ENCODE measurements at regions of chr1 and their contacts with region 1.

Region 1: DNA sequence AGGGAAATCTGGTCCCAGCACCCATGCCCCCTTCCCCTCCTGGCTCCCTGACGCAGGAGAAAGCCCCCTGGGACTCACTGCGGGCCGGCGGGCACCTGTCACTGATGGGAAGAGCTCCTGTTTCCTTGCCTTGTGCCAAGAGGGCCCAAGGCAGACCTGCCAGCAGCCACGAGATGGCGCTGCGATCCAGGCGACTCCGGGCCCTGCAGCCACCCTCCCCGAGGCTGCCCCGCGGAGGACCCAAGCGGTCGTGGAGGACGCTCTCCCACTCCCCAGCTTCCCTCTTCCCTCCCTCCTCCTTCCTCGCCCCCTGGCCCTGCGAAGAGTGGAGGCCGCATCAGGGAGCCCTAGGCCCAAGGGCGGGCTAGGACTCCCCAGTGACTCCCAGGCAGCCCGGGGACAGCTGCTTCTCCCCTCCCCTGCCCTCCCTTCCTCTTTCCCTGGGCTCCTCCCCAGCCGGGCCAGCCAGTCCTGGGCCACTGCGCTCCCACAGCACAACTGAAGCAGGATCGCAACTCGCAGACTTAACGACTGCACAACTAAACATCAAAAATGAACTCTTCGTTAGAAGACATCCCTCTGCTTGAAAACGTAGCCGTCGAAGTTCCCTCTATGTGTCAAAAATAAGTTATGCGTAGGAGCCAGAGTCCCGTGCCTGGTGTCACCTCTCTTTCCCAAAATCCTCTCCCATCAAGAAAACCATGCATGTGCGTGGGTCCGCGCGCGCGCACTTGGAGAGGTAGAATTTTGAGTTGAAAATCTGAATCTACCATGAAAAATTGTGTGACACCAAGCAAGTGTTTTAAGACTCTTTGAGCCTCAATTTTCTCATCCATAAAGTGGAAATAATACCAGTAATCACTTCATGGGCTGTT is 34.2 kb downstream of the BATF3 start:
- DNase-seq: peak; percentile 81
- H3K4me3 ChIP-seq: peak overlapping the region in 2 of 3 experiments; percentile 39 to 40
- H3K27ac ChIP-seq: peak overlapping the region; percentile 41
- H3K4me1 ChIP-seq: peaks cover 27% of the 10 kb centered on the region
- H3K27me3 ChIP-seq: peaks cover 3 to 4% of the 10 kb centered on the region in 2 experiments
- CTCF ChIP-seq: peak; percentile 90 to 98
- POLR2A ChIP-seq: no peak

Region 2: GRCh38 chr1:212520746-212521145 is 144.7 kb before region 1 on chr1:
- CTCF ChIA-PET with region 1: no interaction called
- POLR2A ChIA-PET with region 1: no interaction called
- dilution Hi-C with region 1: no loop called
- intact Hi-C with region 1: no loop called
- DNase-seq: no peak
- H3K4me3 ChIP-seq: no peak overlapping the region
- H3K27ac ChIP-seq: no peak overlapping the region
- H3K4me1 ChIP-seq: no peaks in the 10 kb centered on the region
- H3K27me3 ChIP-seq: peaks cover 22 to 27% of the 10 kb centered on the region in 2 experiments
- CTCF ChIP-seq: no peak
- POLR2A ChIP-seq: no peak

Region 3: DNA sequence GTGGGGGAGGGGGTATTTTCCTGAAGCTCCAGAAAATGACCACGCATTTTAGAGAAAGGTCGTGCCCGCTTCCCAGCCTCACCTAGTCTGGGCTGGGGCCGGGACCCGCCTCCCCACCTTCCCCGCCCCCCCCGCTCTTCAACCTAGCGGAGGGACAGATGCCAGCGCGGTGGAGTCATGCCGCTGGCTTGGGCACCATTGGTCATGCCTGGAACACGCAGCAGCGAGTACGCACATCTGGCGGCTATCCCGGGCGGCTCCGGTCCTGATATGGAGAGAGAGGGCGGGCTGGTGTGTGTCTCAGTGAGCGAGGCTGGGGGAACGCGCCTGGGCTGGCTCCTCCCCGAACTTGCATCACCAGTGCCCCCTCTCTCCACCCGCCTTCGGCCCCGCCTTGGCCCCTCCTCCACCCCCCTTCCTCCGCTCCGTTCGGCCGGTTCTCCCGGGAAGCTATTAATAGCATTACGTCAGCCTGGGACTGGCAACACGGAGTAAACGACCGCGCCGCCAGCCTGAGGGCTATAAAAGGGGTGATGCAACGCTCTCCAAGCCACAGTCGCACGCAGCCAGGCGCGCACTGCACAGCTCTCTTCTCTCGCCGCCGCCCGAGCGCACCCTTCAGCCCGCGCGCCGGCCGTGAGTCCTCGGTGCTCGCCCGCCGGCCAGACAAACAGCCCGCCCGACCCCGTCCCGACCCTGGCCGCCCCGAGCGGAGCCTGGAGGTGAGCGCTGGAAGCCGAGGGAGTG is 57.1 kb before region 1 on chr1 and contains the start of gene ATF3:
- CTCF ChIA-PET with region 1: interaction called, 71 read pairs
- POLR2A ChIA-PET with region 1: interaction called, 13 read pairs
- dilution Hi-C with region 1: no loop called
- intact Hi-C with region 1: loop called (anchors 1 kb)
- DNase-seq: peak; percentile 98
- H3K4me3 ChIP-seq: peak within 1 kb of the TSS; percentile 51 to 77 (median 52)
- H3K27ac ChIP-seq: peak within 1 kb of the TSS; percentile 76
- H3K4me1 ChIP-seq: peaks cover 27% of the 10 kb centered on the region
- H3K27me3 ChIP-seq: peaks cover 38 to 44% of the 10 kb centered on the region in 2 experiments
- CTCF ChIP-seq: no peak
- POLR2A ChIP-seq: peak; percentile 98
- total RNA-seq, gene ATF3: 6.1 and 10.7 TPM in 2 replicates

Region 4: DNA sequence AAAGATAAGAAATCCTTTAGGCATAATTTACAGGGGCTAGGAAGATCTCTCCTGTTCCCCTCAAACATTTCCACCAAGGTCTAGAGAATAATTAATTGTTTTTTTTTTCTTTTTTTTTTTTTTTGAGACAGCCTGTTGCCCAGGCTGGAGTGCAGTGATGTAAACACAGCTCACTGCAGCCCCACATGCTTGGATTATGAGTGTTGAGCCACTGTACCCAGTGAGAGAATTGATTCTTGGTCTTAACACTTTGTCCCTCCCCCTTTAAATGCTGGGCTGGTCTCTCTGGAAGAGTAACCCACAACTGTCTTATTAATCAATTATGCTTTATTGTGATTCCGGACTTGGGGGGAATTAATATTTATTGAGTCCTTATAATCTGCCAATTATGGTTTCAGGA is 23.5 kb before region 1 on chr1:
- CTCF ChIA-PET with region 1: interaction called, 23 read pairs
- POLR2A ChIA-PET with region 1: no interaction called
- dilution Hi-C with region 1: no loop called
- intact Hi-C with region 1: no loop called
- DNase-seq: no peak
- H3K4me3 ChIP-seq: no peak overlapping the region
- H3K27ac ChIP-seq: no peak overlapping the region
- H3K4me1 ChIP-seq: peaks cover 15% of the 10 kb centered on the region
- H3K27me3 ChIP-seq: peaks cover 0 to 5% of the 10 kb centered on the region in 2 experiments
- CTCF ChIP-seq: no peak
- POLR2A ChIP-seq: no peak

Region 5: GRCh38 chr1:212699104-212699624 is 33.7 kb after region 1 on chr1:
- CTCF ChIA-PET with region 1: interaction called, 23 read pairs
- POLR2A ChIA-PET with region 1: no interaction called
- dilution Hi-C with region 1: no loop called
- intact Hi-C with region 1: loop called (anchors 2 kb)
- DNase-seq: peak; percentile 18
- H3K4me3 ChIP-seq: peak overlapping the region in 1 of 3 experiments; percentile 38
- H3K27ac ChIP-seq: no peak overlapping the region
- H3K4me1 ChIP-seq: peaks cover 16% of the 10 kb centered on the region
- H3K27me3 ChIP-seq: peaks cover 37 to 62% of the 10 kb centered on the region in 2 experiments
- CTCF ChIP-seq: peak; percentile 33 to 75
- POLR2A ChIP-seq: no peak

Region 6: GRCh38 chr1:212743901-212744475 is 78.5 kb after region 1 on chr1:
- CTCF ChIA-PET with region 1: interaction called, 65 read pairs
- POLR2A ChIA-PET with region 1: no interaction called
- dilution Hi-C with region 1: no loop called
- intact Hi-C with region 1: no loop called
- DNase-seq: no peak
- H3K4me3 ChIP-seq: no peak overlapping the region
- H3K27ac ChIP-seq: no peak overlapping the region
- H3K4me1 ChIP-seq: no peaks in the 10 kb centered on the region
- H3K27me3 ChIP-seq: no peaks in the 10 kb centered on the region
- CTCF ChIP-seq: no peak
- POLR2A ChIP-seq: no peak

Region 7: DNA sequence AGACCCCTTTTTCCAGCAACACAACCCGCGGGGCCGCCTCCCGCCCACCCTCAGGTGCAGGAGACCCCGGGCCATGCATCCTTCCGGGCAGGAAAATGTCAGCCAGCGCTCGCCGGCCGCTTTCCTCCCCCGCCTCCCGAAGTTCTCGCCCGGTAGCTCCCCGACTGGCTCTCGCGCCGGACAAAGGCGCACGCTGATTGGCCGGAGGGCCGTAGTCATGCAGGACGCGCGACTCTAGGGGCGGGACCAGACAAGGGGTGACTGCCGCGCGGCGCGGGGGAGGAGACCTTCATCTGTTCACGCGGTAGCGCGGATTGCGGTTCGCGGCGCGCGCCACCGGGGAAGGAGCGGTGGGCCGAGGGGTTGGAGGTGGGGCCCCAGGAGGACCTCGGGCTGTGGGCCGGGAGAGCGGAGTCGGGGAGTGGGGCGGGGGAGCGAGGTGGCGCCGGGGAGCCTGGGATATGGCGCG is 192.5 kb after region 1 on chr1 and contains the start of gene FLVCR1:
- CTCF ChIA-PET with region 1: interaction called, 9 read pairs
- POLR2A ChIA-PET with region 1: no interaction called
- dilution Hi-C with region 1: no loop called
- intact Hi-C with region 1: loop called (anchors 2 kb)
- DNase-seq: peak; percentile 94
- H3K4me3 ChIP-seq: peak within 1 kb of the TSS; percentile 10 to 88 (median 51)
- H3K27ac ChIP-seq: peak within 1 kb of the TSS; percentile 24
- H3K4me1 ChIP-seq: peaks cover 19% of the 10 kb centered on the region
- H3K27me3 ChIP-seq: no peaks in the 10 kb centered on the region
- CTCF ChIP-seq: no peak
- POLR2A ChIP-seq: peak; percentile 57
- total RNA-seq, gene FLVCR1: 11.9 and 12.0 TPM in 2 replicates

Measured in endothelial cell of umbilical vein (primary cell).